ENCODE measurements at regions of chr2 and their contacts with region 1.

Region 1: GRCh38 chr2:234500394-234501006 is 3.6 kb upstream of the ARL4C start:
- DNase-seq: peak in 1 of 2 donors; percentile 68
- ATAC-seq: peak; percentile 55
- H3K4me3 ChIP-seq: no peak overlapping the region
- H3K27ac ChIP-seq: no peak overlapping the region
- H3K4me1 ChIP-seq: no peaks in the 10 kb centered on the region
- H3K27me3 ChIP-seq: no peaks in the 10 kb centered on the region

Region 2: GRCh38 chr2:233976690-233977294 is 523.7 kb before region 1 on chr2:
- intact Hi-C with region 1: loop called in 1 of 2 experiments (anchors 10 kb)
- DNase-seq: no peak
- ATAC-seq: peak; percentile 41
- H3K4me3 ChIP-seq: no peak overlapping the region
- H3K27ac ChIP-seq: no peak overlapping the region
- H3K4me1 ChIP-seq: no peaks in the 10 kb centered on the region
- H3K27me3 ChIP-seq: no peaks in the 10 kb centered on the region

Region 3: GRCh38 chr2:234135720-234136221 is 364.7 kb before region 1 on chr2:
- intact Hi-C with region 1: loop called (anchors 5 to 10 kb)
- DNase-seq: peak; percentile 70 to 74
- ATAC-seq: peak; percentile 37
- H3K4me3 ChIP-seq: no peak overlapping the region
- H3K27ac ChIP-seq: no peak overlapping the region
- H3K4me1 ChIP-seq: no peaks in the 10 kb centered on the region
- H3K27me3 ChIP-seq: no peaks in the 10 kb centered on the region

Region 4: GRCh38 chr2:234288974-234289455 is 211.5 kb before region 1 on chr2:
- intact Hi-C with region 1: loop called in 1 of 2 experiments (anchors 2 kb)
- DNase-seq: peak; percentile 72 to 84
- ATAC-seq: peak; percentile 59
- H3K4me3 ChIP-seq: no peak overlapping the region
- H3K27ac ChIP-seq: no peak overlapping the region
- H3K4me1 ChIP-seq: no peaks in the 10 kb centered on the region
- H3K27me3 ChIP-seq: no peaks in the 10 kb centered on the region

Region 5: GRCh38 chr2:234444890-234445289 is 55.6 kb before region 1 on chr2:
- intact Hi-C with region 1: loop called in 1 of 2 experiments (anchors 5 kb)
- DNase-seq: peak in 1 of 2 donors; percentile 86
- ATAC-seq: no peak
- H3K4me3 ChIP-seq: no peak overlapping the region
- H3K27ac ChIP-seq: peak overlapping the region in 1 of 2 donors; percentile 68
- H3K4me1 ChIP-seq: no peaks in the 10 kb centered on the region
- H3K27me3 ChIP-seq: no peaks in the 10 kb centered on the region